HEK293T (cell line): ENCODE measurements at regions of chr1 and their contacts with region 1.

Region 1: DNA sequence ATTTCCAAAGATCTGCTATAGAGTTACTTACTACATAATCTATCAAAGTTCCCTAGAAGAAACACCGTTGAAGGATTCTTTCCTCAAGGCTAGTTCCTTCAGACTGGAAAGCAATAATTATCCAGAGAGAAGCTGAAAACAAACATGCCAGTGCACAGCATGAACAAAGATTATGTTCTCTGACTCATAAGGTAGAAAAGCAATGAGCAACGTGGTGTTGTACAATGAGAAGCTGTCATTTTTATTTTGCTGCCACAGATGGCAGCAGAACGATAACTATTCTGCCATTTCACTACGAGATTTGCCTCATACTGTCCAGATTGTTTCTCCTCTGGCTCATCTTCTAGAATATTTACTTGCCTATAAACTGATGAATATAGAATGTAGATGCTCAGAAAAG is 10.7 kb downstream of the EXTL2 start:
- DNase-seq: peak; percentile 34

Region 2: GRCh38 chr1:100810360-100810759 is 73.6 kb before region 1 on chr1:
- CTCF ChIA-PET with region 1: no interaction called
- POLR2A ChIA-PET with region 1: no interaction called
- DNase-seq: no peak

Region 3: GRCh38 chr1:100895540-100896483 is 11.8 kb after region 1 on chr1 and contains the start of gene SLC30A7:
- CTCF ChIA-PET with region 1: interaction called, 3 read pairs
- POLR2A ChIA-PET with region 1: interaction called, 39 read pairs
- DNase-seq: peak; percentile 95